ENCODE measurements at regions of chr3 and their contacts with region 1.

Region 1: GRCh38 chr3:79086514-79086913 is 681.3 kb downstream of the ROBO1 start:
- DNase-seq: peak; percentile 20
- H3K4me3 ChIP-seq: no peak overlapping the region
- H3K27ac ChIP-seq: no peak overlapping the region
- H3K4me1 ChIP-seq: no peaks in the 10 kb centered on the region
- H3K27me3 ChIP-seq: no peaks in the 10 kb centered on the region
- CTCF ChIP-seq: peak; percentile 51 to 72 (median 63)
- EP300 ChIP-seq: no peak
- POLR2A ChIP-seq: no peak

Region 2: DNA sequence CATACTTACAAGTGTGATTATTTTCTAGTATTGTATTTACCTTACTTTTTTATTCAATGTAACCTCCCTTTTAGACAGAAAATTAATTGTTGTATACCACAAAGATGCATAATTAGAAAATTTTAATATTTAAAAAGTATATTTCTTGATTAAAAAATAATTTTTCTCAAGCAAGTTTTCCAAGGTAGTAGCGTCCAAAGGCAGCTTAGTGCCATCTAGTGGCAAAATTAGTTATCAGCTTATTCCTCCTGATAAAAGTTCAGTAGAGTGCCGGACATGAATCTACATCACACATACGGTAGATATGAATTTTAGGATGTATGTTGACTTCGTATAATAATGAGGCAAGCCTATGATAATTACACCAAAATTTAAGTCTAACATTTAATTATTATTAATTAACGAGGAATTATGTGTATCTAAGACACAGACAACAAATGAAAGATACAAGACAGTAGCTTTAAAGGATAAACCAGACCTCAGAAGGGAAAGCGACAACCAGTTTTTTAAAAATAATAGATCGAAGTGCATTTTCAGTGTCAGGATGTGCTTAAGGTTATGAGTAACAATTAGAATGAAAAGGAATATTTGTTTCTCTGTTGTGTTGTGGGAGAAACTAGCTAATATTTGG is 275.3 kb after region 1 on chr3:
- in situ Hi-C with region 1: loop called (anchors 25 kb)
- intact Hi-C with region 1: loop called (anchors 5 kb)
- DNase-seq: no peak
- H3K4me3 ChIP-seq: no peak overlapping the region
- H3K27ac ChIP-seq: no peak overlapping the region
- H3K4me1 ChIP-seq: no peaks in the 10 kb centered on the region
- H3K27me3 ChIP-seq: no peaks in the 10 kb centered on the region
- CTCF ChIP-seq: peak; percentile 51 to 83 (median 69)
- EP300 ChIP-seq: no peak
- POLR2A ChIP-seq: no peak

Measured in transverse colon (tissue), 4 donors.